ENCODE measurements at regions of chr11 and their contacts with region 1.

Region 1: GRCh38 chr11:59668950-59669610 is at the start of gene PATL1:
- DNase-seq: peak; percentile 100
- ATAC-seq: peak; percentile 98
- H3K4me3 ChIP-seq: peak within 1 kb of the TSS; percentile 98
- H3K27ac ChIP-seq: peak within 1 kb of the TSS; percentile 100
- H3K4me1 ChIP-seq: no peaks in the 10 kb centered on the region
- H3K27me3 ChIP-seq: no peaks in the 10 kb centered on the region
- total RNA-seq, gene PATL1: 20.2 to 30.2 (median 23.7) TPM

Region 2: GRCh38 chr11:59542142-59542810 is 126.8 kb before region 1 on chr11:
- intact Hi-C with region 1: loop called in 1 of 4 experiments (anchors 2 kb)
- DNase-seq: no peak
- ATAC-seq: no peak
- H3K4me3 ChIP-seq: no peak overlapping the region
- H3K27ac ChIP-seq: no peak overlapping the region
- H3K4me1 ChIP-seq: no peaks in the 10 kb centered on the region
- H3K27me3 ChIP-seq: no peaks in the 10 kb centered on the region

Region 3: GRCh38 chr11:59550368-59550841 is 118.7 kb before region 1 on chr11:
- intact Hi-C with region 1: loop called in 1 of 4 experiments (anchors 10 kb)
- DNase-seq: peak; percentile 82 to 87 (median 86)
- ATAC-seq: peak; percentile 84 to 90
- H3K4me3 ChIP-seq: peak overlapping the region; percentile 46
- H3K27ac ChIP-seq: peak overlapping the region; percentile 5
- H3K4me1 ChIP-seq: no peaks in the 10 kb centered on the region
- H3K27me3 ChIP-seq: no peaks in the 10 kb centered on the region

Region 4: GRCh38 chr11:59802639-59803176 is 133.6 kb after region 1 on chr11:
- intact Hi-C with region 1: loop called in 1 of 4 experiments (anchors 10 kb)
- DNase-seq: no peak
- ATAC-seq: peak; percentile 74 to 77
- H3K4me3 ChIP-seq: no peak overlapping the region
- H3K27ac ChIP-seq: no peak overlapping the region
- H3K4me1 ChIP-seq: no peaks in the 10 kb centered on the region
- H3K27me3 ChIP-seq: no peaks in the 10 kb centered on the region

Region 5: GRCh38 chr11:59857444-59858434 is 188.7 kb after region 1 on chr11:
- intact Hi-C with region 1: no loop called
- DNase-seq: no peak
- ATAC-seq: no peak
- H3K4me3 ChIP-seq: no peak overlapping the region
- H3K27ac ChIP-seq: no peak overlapping the region
- H3K4me1 ChIP-seq: no peaks in the 10 kb centered on the region
- H3K27me3 ChIP-seq: no peaks in the 10 kb centered on the region

Region 6: DNA sequence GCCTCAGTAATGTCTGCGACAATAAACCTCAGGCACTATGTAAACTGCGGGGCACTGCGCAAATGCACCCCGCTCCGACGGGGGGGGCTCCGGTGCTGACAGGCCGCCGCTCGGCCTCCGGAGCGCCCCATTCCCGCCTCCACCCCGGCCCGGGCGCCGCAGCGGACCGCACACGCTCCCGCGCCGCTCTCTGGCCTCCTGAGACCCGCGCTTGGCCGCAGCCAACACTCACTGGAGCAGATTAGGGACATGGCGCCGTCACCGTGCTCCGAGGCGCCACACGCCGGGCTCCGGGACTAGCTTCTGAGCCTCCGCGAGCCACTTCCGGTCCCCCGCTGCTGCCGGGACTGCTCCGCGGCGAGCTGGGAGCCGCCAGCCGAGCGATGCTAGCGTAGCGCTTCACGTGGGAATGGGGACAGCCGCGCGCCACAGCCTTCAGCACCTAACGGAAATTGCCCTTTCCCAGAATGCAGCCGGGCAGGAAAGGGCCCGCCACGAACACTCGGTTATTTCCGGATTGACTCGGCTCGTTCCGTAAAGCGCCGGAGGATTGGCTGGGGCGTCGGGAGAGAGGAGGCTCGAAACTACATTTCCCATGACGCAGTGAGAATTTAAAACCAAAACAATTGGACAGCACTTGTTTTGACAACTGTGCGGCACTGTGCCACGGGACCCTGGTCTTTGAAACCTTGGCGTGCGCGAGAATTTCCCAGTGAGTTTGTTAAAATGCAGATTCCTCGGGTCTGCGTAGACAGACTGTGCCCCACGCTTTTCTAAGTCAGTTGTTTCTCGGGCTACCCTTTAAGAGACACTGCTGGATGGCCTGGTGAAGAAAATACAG is 1237.3 kb after region 1 on chr11 and contains the start of gene PRPF19:
- intact Hi-C with region 1: no loop called
- DNase-seq: peak; percentile 97 to 99 (median 99)
- ATAC-seq: peak; percentile 97
- H3K4me3 ChIP-seq: peak within 1 kb of the TSS; percentile 76
- H3K27ac ChIP-seq: peak within 1 kb of the TSS; percentile 61
- H3K4me1 ChIP-seq: peaks cover 4% of the 10 kb centered on the region
- H3K27me3 ChIP-seq: no peaks in the 10 kb centered on the region
- total RNA-seq, gene PRPF19: 35.4 to 43.4 (median 38.8) TPM

Measured in right cardiac atrium (tissue), 5 donors.